Activated CD4-positive, alpha-beta memory T cell treated with anti-CD3 and anti-CD28 coated beads for 36 hours (primary cell): ENCODE measurements at regions of chr1 and their contacts with region 1.

Region 1: DNA sequence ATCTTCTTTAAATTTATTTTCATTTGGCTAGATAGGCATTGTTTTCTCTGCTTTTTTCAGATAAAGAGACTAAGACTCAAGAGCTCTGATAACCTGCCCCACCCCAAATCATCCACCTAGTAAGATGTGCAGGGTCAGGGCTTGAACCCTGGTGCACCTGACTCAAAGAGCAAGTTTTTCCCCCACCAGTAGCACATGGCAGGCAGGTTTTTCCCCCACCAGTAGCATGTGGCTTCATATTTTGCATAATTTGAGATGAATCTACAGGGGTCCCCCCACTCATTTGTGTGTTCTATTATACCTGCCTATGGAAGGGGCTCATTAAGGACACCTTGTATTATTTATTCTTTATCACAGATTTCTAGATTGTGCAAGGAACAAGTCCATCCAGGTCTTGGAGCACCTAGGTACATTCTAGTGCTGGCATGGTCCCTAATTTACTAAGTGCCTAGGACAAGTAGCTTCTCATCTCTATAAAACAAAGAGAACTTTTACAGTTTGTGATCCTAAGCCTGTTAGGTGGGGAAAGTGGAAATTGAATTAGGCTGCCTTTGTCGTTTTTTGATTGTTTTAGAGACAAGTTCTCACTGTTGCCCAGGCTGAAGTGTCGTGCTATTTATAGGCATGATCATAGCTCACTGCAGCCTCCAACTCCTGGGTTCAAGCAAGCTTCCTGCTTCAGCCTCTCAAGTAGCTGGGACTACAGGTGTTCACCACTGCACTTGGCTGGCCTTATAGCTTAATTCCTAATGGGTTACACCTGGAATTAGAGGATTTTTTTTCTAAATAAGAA is 13.2 kb upstream of the CTSE start:
- DNase-seq: no peak
- H3K4me3 Mint-ChIP-seq: no peak overlapping the region
- H3K27ac Mint-ChIP-seq: no peak overlapping the region
- H3K4me1 Mint-ChIP-seq: peaks cover 18% of the 10 kb centered on the region
- H3K27me3 Mint-ChIP-seq: peaks cover 2% of the 10 kb centered on the region

Region 2: DNA sequence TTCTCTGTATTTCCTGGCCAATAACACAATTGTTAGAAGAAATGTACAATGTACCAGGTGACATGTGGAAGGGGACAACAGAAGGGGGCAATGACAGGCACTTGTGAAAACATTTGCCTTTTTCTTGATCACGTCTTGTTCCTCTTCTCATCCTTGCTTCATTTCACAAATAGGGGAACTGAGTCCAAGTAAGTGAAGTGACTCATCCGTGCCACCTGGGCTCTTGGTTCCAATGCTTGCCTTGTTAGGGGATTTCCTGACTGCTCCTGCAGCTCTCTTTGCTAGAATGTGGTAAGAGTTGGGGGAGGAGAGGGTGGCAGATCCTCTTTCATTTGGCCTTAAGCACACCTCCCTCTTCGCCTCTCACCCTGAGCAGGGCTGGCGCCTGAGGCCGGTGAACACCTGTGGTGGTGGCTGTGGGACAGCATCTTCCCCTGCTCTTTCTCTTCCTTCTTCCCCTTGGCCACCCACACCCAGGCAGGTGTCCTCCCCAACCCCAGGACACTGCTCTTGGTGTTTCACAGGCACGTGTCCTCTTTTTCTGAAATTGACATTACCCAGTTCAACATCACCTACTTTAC is 13.9 kb after region 1 on chr1:
- CTCF ChIA-PET with region 1: interaction called, 10 read pairs
- POLR2A ChIA-PET with region 1: no interaction called
- intact Hi-C with region 1: loop called (anchors 2 kb)
- DNase-seq: peak; percentile 76
- H3K4me3 Mint-ChIP-seq: no peak overlapping the region
- H3K27ac Mint-ChIP-seq: peak overlapping the region; percentile 57
- H3K4me1 Mint-ChIP-seq: peaks cover 37% of the 10 kb centered on the region
- H3K27me3 Mint-ChIP-seq: no peaks in the 10 kb centered on the region